ENCODE measurements at regions of chr19 and their contacts with region 1.

Region 1: GRCh38 chr19:34539396-34539795 is 57.8 kb downstream of the WTIP start:
- DNase-seq: no peak
- ATAC-seq: no peak
- H3K4me3 ChIP-seq: no peak overlapping the region
- H3K27ac ChIP-seq: no peak overlapping the region
- H3K4me1 ChIP-seq: no peaks in the 10 kb centered on the region
- H3K27me3 ChIP-seq: no peaks in the 10 kb centered on the region
- CTCF ChIP-seq: no peak

Region 2: DNA sequence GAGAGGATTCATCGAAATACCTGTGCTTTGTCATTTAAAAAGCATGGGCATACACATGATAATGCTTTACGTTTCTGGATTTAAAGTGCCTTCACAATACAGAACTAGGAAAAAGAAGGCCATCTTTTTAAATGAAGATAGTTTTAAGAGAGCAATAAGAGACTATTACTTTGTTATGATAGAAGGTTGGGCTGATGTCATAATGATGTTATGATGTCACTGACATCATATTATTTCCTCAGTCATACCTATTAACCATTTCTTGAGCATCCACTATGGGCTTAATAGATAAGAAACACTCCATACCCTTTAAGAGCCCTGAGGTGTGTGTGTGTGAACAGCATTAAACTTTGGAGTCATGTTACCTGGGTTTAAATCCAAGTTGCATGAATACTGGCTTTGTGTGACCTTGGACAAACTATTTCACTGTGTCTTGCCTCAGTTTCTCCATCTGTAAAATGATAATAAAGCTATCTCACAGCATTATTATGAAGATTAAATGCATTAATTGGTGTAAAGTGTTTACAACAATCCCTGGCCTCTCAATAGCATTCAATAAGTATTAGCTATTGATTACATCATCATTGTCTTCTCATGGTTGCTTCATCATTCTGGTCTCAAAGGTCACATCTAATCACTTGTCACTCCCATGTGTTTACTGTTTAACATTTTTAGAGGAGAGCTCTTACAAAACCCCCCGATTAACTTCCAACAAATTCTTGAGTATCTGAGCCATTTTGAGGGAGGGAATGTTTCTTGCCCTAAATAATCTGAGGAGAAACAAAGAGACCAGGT is 205.7 kb after region 1 on chr19:
- intact Hi-C with region 1: loop called in 1 of 2 experiments (anchors 2 kb)
- DNase-seq: no peak
- ATAC-seq: no peak
- H3K4me3 ChIP-seq: no peak overlapping the region
- H3K27ac ChIP-seq: no peak overlapping the region
- H3K4me1 ChIP-seq: no peaks in the 10 kb centered on the region
- H3K27me3 ChIP-seq: no peaks in the 10 kb centered on the region
- CTCF ChIP-seq: no peak

Measured in left lung (tissue), 14 donors.